Ovary (tissue), 10 donors: ENCODE measurements at regions of chr15 and their contacts with region 1.

Region 1: DNA sequence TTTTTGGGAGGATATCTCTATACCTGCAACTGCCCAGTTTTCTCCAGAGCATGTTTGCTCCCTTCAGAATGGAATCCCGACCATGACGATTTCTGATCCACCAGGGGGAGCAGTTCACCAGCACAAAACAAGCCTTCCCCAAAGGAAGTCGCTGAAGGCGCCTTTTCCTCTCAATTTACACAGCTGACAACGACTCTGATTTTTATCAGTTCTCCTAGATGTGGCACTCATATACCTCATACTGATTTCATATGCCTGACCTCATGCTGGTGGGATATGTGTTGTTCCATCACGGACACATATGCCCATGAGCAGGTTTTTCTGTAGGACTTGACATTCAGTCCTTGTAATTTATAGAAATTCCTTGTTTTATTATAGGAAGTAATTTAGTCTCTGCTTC is 1028.2 kb downstream of the MCTP2 start:
- DNase-seq: peak; percentile 71 to 83 (median 74)
- H3K4me3 ChIP-seq: no peak overlapping the region
- H3K27ac ChIP-seq: peak overlapping the region in 1 of 2 donors; percentile 29
- H3K4me1 ChIP-seq: peaks cover 8% of the 10 kb centered on the region
- H3K27me3 ChIP-seq: no peaks in the 10 kb centered on the region
- CTCF ChIP-seq: peak; percentile 63 to 82 (median 78)
- EP300 ChIP-seq: no peak
- POLR2A ChIP-seq: no peak

Region 2: GRCh38 chr15:94206463-94207167 is 1052.9 kb before region 1 on chr15:
- intact Hi-C with region 1: no loop called
- DNase-seq: no peak
- H3K4me3 ChIP-seq: no peak overlapping the region
- H3K27ac ChIP-seq: no peak overlapping the region
- H3K4me1 ChIP-seq: no peaks in the 10 kb centered on the region
- H3K27me3 ChIP-seq: no peaks in the 10 kb centered on the region
- CTCF ChIP-seq: no peak
- EP300 ChIP-seq: no peak
- POLR2A ChIP-seq: no peak

Region 3: DNA sequence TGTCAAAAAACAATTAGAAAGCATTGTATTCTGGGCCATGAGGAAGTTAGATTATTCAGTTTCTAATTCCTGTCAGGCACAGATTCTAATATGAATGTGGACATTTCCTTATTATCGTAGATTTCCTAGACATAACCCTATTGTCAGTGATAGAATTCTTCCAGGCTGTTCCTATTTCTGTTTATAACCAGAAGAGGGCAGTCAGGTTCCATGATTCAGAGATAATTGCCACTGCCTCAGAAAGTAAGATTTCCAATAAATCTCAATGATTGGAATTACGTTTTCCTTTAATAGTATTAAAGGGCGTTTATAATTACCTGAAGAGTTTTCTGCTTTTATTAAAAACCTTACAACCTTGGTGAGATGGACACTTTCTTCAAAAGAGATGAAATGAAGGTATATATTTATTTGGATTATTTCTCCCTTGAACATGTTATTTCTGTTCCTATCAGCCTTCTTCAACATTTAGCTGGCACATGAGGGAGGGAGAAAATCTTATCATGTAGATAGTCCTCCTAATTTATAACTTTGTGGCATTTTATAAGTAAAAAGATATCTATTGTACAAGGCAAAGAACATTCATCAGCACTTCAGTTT is 589.0 kb before region 1 on chr15:
- intact Hi-C with region 1: loop called in 1 of 4 experiments (anchors 10 kb)
- DNase-seq: no peak
- H3K4me3 ChIP-seq: no peak overlapping the region
- H3K27ac ChIP-seq: peak overlapping the region in 1 of 2 donors; percentile 41
- H3K4me1 ChIP-seq: no peaks in the 10 kb centered on the region
- H3K27me3 ChIP-seq: no peaks in the 10 kb centered on the region
- CTCF ChIP-seq: peak; percentile 39 to 84 (median 73)
- EP300 ChIP-seq: no peak
- POLR2A ChIP-seq: no peak

Region 4: DNA sequence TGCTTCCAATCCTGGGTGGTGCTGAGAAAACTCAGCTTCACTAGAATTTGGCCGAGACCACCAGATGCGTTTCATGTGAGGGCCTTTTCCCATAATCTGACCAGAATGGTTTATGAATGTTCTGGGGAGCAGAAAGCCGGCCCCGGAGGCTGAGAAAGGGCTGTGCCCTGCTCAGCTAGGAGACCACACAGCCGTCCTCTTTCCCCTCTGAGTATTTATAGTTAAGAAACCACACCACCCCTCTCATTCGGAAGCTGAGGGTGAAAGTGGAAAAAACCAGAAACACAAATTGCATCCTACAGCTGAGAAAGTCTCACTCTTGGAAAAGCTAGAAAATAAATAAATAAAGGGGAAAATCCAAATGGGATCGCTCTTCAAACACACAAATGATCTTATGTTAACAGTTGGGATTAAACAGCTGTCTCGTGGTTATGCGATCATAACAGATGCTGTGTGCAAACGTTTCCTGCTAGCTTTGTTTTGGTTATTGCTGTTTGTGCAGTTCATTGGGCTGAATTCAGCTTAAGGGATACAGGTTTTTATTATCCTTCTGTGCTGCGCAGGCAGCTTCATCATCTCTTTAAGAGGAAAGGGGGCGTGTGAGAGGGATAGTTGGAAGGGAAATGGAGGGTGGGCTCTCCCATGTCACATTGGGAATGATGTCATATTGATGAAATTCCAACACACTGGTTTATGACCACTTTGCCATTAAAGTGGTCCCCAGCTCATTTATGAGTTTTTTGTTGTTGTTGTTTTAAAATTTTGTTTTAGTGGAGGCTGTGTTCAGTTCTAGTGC is 44.8 kb after region 1 on chr15:
- intact Hi-C with region 1: no loop called
- DNase-seq: peak in 3 of 5 donors; percentile 33 to 52 (median 51)
- H3K4me3 ChIP-seq: no peak overlapping the region
- H3K27ac ChIP-seq: peak overlapping the region; percentile 52 to 76
- H3K4me1 ChIP-seq: peaks cover 8% of the 10 kb centered on the region
- H3K27me3 ChIP-seq: no peaks in the 10 kb centered on the region
- CTCF ChIP-seq: no peak
- EP300 ChIP-seq: no peak
- POLR2A ChIP-seq: no peak

Region 5: GRCh38 chr15:95326431-95327182 is 67.1 kb after region 1 on chr15:
- intact Hi-C with region 1: loop called in 3 of 4 experiments (anchors 5 to 10 kb)
- DNase-seq: peak; percentile 70 to 84 (median 78)
- H3K4me3 ChIP-seq: peak overlapping the region; percentile 56
- H3K27ac ChIP-seq: peak overlapping the region; percentile 84 to 98
- H3K4me1 ChIP-seq: peaks cover 4% of the 10 kb centered on the region
- H3K27me3 ChIP-seq: no peaks in the 10 kb centered on the region
- CTCF ChIP-seq: no peak
- EP300 ChIP-seq: peak; percentile 17
- POLR2A ChIP-seq: peak; percentile 8

Region 6: DNA sequence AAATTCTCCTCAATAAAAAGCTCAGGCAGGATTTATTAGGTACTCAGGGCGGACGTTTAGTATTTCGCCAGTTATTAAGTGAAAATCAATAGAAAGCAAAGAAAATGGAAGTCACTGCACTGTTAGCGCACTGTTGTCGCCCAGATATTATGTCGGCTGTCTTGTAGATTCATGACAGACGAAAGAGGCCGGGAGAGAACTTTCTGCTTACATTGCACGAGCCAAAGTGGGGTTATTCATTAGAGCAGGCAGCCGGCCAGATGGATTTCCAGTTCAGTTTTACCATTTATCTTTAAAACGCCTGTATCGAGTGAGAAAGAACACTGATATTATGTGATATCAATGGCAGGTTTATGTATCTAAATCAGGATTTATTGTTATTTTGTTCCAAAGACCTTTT is 205.0 kb after region 1 on chr15:
- intact Hi-C with region 1: loop called in 2 of 4 experiments (anchors 10 kb)
- DNase-seq: peak; percentile 57 to 83 (median 77)
- H3K4me3 ChIP-seq: no peak overlapping the region
- H3K27ac ChIP-seq: peak overlapping the region in 1 of 2 donors; percentile 77
- H3K4me1 ChIP-seq: peaks cover 11% of the 10 kb centered on the region
- H3K27me3 ChIP-seq: no peaks in the 10 kb centered on the region
- CTCF ChIP-seq: no peak
- EP300 ChIP-seq: no peak
- POLR2A ChIP-seq: no peak

Region 7: GRCh38 chr15:95604634-95605036 is 345.1 kb after region 1 on chr15:
- intact Hi-C with region 1: loop called in 1 of 4 experiments (anchors 5 kb)
- DNase-seq: peak in 3 of 5 donors; percentile 24 to 53 (median 31)
- H3K4me3 ChIP-seq: no peak overlapping the region
- H3K27ac ChIP-seq: no peak overlapping the region
- H3K4me1 ChIP-seq: no peaks in the 10 kb centered on the region
- H3K27me3 ChIP-seq: no peaks in the 10 kb centered on the region
- CTCF ChIP-seq: no peak
- EP300 ChIP-seq: no peak
- POLR2A ChIP-seq: no peak